Activated CD4-positive, alpha-beta T cell treated with anti-CD3 and anti-CD28 coated beads, Interleukin-2, amount 10 ng/mL, durations not matched to agents 24 days and 14 days (primary cell): ENCODE measurements at regions of chr14 and their contacts with region 1.

Region 1: GRCh38 chr14:54805521-54806322 is 96.9 kb downstream of the GCH1 start:
- DNase-seq: peak; percentile 92
- H3K4me3 Mint-ChIP-seq: no peak overlapping the region
- H3K27ac Mint-ChIP-seq: no peak overlapping the region
- H3K4me1 Mint-ChIP-seq: peaks cover 4% of the 10 kb centered on the region
- H3K27me3 Mint-ChIP-seq: peaks cover 27% of the 10 kb centered on the region

Region 2: DNA sequence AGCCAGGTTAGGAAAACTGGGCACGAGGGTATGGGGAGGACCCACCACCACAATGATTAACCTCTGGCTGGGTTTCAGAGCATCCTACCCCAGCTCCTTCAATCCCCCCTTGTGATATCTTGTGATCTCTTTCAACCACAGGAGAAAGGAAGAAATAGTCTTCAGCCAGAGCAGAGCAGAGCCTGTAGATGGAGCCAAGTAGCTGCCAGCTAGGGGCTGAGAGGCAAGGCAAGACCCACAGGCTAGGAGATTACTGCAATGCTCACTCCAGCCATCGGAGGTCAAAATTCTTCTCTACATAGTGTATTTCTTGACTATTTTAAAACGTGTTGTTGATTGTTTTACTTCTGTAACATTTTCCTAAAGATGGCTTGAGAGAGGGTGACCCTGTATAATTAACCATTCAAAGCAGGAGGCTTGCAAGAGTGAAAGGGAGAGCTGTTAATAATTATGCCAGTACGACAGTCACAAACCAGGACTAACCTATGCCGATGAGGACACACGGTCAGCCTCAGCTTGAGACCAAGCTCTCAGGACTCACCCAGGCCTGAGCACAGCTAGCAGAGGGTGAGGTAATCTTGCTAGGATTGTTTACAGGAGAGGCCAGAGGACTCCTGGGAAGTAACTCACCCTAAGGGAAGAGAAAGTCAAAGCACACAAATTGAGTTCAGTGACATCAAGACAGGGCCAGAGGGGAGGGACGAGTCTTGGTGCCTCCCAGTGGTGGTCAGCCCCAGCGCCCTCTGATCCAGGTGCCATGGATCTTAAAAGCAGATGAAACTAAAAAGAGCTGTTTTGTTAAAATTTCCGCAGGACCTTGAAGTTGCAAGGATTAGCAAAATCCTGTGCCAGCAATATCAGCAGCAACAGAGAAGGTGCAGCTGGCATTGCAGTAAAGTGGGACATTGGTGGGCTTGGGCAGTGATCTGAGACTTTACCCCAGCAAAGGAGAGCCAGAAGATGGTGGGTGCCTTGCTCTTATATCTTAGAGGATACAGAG is 438.7 kb before region 1 on chr14:
- intact Hi-C with region 1: loop called (anchors 10 kb)
- DNase-seq: peak; percentile 70
- H3K4me3 Mint-ChIP-seq: no peak overlapping the region
- H3K27ac Mint-ChIP-seq: no peak overlapping the region
- H3K4me1 Mint-ChIP-seq: peaks cover 6% of the 10 kb centered on the region
- H3K27me3 Mint-ChIP-seq: peaks cover 19% of the 10 kb centered on the region

Region 3: DNA sequence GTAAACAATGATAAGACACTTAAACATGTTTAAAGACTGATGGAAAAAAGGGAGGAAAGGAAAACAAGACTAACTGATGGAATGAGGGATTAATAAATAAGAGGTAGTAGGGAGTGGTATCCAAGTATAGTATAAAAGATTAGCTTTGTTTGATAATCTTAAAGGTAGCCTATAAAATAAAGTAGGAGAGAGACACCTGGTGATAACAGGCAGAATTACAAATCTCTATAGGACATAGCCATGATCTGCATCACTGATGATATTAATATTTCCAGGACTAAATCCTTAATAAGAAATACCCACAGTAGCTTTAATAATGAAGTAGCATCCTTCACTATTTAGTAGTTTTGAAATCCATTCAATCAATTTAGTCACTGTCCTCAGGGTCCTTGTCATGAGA is 355.3 kb after region 1 on chr14:
- intact Hi-C with region 1: no loop called
- DNase-seq: no peak
- H3K4me3 Mint-ChIP-seq: no peak overlapping the region
- H3K27ac Mint-ChIP-seq: no peak overlapping the region
- H3K4me1 Mint-ChIP-seq: peaks cover 19% of the 10 kb centered on the region
- H3K27me3 Mint-ChIP-seq: no peaks in the 10 kb centered on the region